Psoas muscle (tissue), 8 donors: ENCODE measurements at regions of chr2 and their contacts with region 1.

Region 1: DNA sequence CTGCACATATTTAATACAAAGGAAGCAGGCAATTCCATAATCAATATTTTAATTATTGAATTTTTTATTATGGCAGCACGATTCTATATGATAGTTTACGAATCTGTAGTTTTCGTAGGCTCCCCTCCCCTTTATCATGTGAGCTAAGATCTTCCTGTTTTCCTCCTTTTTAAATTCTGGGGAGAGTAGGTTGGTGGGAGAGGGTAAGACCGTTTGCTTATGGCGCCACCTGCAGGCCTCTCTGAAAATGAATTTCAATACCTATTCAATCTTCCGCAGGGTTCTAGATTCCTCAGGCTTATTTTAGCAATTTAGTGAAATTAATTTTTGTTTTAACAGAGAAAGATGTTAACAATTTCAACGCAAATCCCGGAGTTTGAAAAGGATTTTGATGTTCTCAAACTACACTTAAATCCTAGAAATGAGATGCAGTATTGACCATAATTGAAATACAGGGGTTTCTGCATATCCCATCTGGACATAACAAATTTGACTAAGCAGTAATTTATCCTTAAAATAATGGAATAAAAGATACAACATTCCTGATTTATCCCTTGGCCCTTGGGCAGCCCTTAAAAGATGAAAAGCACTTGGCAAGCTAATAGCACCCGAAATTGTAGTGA is 12.8 kb upstream of the GBX2 start:
- DNase-seq: no peak
- ATAC-seq: no peak
- H3K4me3 ChIP-seq: no peak overlapping the region
- H3K27ac ChIP-seq: no peak overlapping the region
- H3K4me1 ChIP-seq: peaks cover 20% of the 10 kb centered on the region
- H3K27me3 ChIP-seq: peaks cover 3 to 62% (median 20%) of the 10 kb centered on the region in 3 donors
- CTCF ChIP-seq: peak; percentile 70

Region 2: GRCh38 chr2:235779444-235779896 is 401.5 kb before region 1 on chr2:
- intact Hi-C with region 1: loop called (anchors 5 kb)
- DNase-seq: peak; percentile 69 to 83
- ATAC-seq: peak; percentile 83 to 91 (median 88)
- H3K4me3 ChIP-seq: no peak overlapping the region
- H3K27ac ChIP-seq: no peak overlapping the region
- H3K4me1 ChIP-seq: no peaks in the 10 kb centered on the region
- H3K27me3 ChIP-seq: no peaks in the 10 kb centered on the region
- CTCF ChIP-seq: peak; percentile 78

Region 3: GRCh38 chr2:235802538-235803427 is 378.2 kb before region 1 on chr2:
- intact Hi-C with region 1: loop called in 1 of 2 experiments (anchors 5 kb)
- DNase-seq: no peak
- ATAC-seq: no peak
- H3K4me3 ChIP-seq: no peak overlapping the region
- H3K27ac ChIP-seq: no peak overlapping the region
- H3K4me1 ChIP-seq: no peaks in the 10 kb centered on the region
- H3K27me3 ChIP-seq: no peaks in the 10 kb centered on the region
- CTCF ChIP-seq: peak; percentile 22

Region 4: DNA sequence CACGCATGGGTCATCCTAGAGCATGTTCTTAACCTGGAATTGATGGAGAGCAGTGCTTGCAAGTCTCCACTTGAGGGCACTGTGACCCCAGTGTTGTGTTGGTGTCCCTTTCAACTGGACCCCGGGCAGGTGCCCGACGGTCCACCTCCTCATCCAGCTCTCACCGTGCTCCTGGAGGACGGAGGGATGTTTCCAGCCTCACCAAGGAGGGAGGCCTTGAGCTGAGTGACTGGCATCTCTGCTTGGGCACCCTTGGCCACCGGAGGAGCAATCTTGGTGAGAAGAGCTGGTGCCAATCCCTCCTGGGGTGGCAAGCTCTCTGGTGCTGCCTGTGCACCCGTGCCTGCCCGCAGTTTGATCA is 128.7 kb after region 1 on chr2:
- intact Hi-C with region 1: loop called in 1 of 2 experiments (anchors 10 kb)
- DNase-seq: no peak
- ATAC-seq: no peak
- H3K4me3 ChIP-seq: no peak overlapping the region
- H3K27ac ChIP-seq: no peak overlapping the region
- H3K4me1 ChIP-seq: no peaks in the 10 kb centered on the region
- H3K27me3 ChIP-seq: no peaks in the 10 kb centered on the region
- CTCF ChIP-seq: peak; percentile 44